Heart right ventricle (tissue), 16 donors: ENCODE measurements at regions of chr15 and their contacts with region 1.

Region 1: GRCh38 chr15:43966646-43967045 is 139.8 kb downstream of the WDR76 start:
- DNase-seq: no peak
- ATAC-seq: no peak
- H3K4me3 ChIP-seq: no peak overlapping the region
- H3K27ac ChIP-seq: no peak overlapping the region
- H3K4me1 ChIP-seq: no peaks in the 10 kb centered on the region
- H3K27me3 ChIP-seq: no peaks in the 10 kb centered on the region
- CTCF ChIP-seq: no peak

Region 2: DNA sequence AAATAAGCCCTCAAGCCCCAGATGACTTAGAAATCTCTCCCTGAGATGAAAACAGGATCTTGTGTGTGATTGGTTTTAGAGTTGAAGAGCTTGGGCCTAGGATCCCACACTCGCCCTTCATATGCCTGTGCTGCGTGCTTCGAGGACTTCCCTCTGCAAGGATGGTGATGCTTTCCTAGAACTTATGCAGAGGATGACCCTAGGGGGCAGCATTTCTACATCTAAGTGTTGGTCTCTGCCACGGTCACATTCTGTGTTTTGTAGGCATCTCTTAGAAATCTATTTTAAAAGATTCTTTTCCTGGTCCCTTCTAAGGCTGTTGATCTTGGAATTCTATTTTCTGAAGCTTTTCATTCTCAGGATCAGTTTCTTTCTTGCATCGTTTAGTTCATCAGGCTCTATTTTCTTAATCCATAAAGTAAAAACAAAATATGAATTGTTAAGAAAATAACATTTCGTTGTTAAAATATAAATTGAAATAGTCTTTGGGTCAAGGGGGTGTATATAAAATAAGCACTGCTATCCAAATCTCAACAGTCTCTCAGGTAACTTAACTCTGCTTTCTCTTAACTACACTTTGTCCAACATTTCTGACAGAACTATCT is 94.1 kb before region 1 on chr15:
- intact Hi-C with region 1: no loop called
- DNase-seq: peak in 1 of 2 donors; percentile 57
- ATAC-seq: peak; percentile 65 to 81 (median 70)
- H3K4me3 ChIP-seq: no peak overlapping the region
- H3K27ac ChIP-seq: peak overlapping the region in 1 of 10 donors; percentile 36
- H3K4me1 ChIP-seq: peaks cover 0 to 53% (median 3%) of the 10 kb centered on the region in 9 donors
- H3K27me3 ChIP-seq: no peaks in the 10 kb centered on the region
- CTCF ChIP-seq: peak in 8 of 9 donors; percentile 18 to 67 (median 62)

Region 3: GRCh38 chr15:43928152-43928551 is 38.5 kb before region 1 on chr15:
- intact Hi-C with region 1: loop called in 1 of 10 experiments (anchors 5 kb)
- DNase-seq: no peak
- ATAC-seq: no peak
- H3K4me3 ChIP-seq: no peak overlapping the region
- H3K27ac ChIP-seq: no peak overlapping the region
- H3K4me1 ChIP-seq: peaks cover 0 to 45% (median 3%) of the 10 kb centered on the region in 9 donors
- H3K27me3 ChIP-seq: no peaks in the 10 kb centered on the region
- CTCF ChIP-seq: no peak